Tibial artery (tissue), 4 donors: ENCODE measurements at regions of chr3 and their contacts with region 1.

Region 1: DNA sequence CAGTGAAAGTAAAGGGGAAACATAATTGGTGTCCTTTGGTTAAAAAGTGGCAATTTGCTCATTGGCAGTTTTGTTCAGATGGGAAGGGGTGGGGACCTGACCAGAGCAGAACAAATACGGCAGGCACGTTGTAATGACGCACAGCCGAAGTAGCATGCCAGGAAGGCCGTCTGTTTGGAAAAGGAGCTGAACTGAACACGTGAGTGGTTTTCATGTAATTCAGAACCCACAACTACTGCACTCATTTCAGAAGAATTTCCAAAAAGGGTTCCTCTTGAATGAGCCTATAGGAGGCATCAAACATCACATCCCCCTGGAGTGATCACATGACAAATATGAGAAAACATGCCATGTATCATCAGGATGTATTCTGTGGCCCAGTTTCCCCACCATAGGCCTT is 42.9 kb upstream of the LMCD1 start:
- DNase-seq: peak; percentile 74 to 93
- H3K4me3 ChIP-seq: no peak overlapping the region
- H3K27ac ChIP-seq: peak overlapping the region; percentile 84 to 91
- H3K4me1 ChIP-seq: peaks cover 0 to 91% (median 55%) of the 10 kb centered on the region in 4 donors
- H3K27me3 ChIP-seq: no peaks in the 10 kb centered on the region
- CTCF ChIP-seq: no peak

Region 2: GRCh38 chr3:8387571-8387970 is 71.1 kb before region 1 on chr3:
- intact Hi-C with region 1: no loop called
- DNase-seq: no peak
- H3K4me3 ChIP-seq: no peak overlapping the region
- H3K27ac ChIP-seq: no peak overlapping the region
- H3K4me1 ChIP-seq: no peaks in the 10 kb centered on the region
- H3K27me3 ChIP-seq: no peaks in the 10 kb centered on the region
- CTCF ChIP-seq: no peak

Region 3: GRCh38 chr3:8501371-8502131 is 42.8 kb after region 1 on chr3 and contains the start of gene LMCD1:
- intact Hi-C with region 1: loop called (anchors 10 kb)
- DNase-seq: peak; percentile 95 to 99
- H3K4me3 ChIP-seq: peak within 1 kb of the TSS; percentile 52 to 60
- H3K27ac ChIP-seq: peak within 1 kb of the TSS; percentile 81 to 86
- H3K4me1 ChIP-seq: peaks cover 0 to 50% (median 32%) of the 10 kb centered on the region in 4 donors
- H3K27me3 ChIP-seq: no peaks in the 10 kb centered on the region
- CTCF ChIP-seq: peak; percentile 40 to 60